Activated CD4-positive, alpha-beta memory T cell treated with anti-CD3 and anti-CD28 coated beads for 36 hours (primary cell): ENCODE measurements at regions of chr1 and their contacts with region 1.

Region 1: DNA sequence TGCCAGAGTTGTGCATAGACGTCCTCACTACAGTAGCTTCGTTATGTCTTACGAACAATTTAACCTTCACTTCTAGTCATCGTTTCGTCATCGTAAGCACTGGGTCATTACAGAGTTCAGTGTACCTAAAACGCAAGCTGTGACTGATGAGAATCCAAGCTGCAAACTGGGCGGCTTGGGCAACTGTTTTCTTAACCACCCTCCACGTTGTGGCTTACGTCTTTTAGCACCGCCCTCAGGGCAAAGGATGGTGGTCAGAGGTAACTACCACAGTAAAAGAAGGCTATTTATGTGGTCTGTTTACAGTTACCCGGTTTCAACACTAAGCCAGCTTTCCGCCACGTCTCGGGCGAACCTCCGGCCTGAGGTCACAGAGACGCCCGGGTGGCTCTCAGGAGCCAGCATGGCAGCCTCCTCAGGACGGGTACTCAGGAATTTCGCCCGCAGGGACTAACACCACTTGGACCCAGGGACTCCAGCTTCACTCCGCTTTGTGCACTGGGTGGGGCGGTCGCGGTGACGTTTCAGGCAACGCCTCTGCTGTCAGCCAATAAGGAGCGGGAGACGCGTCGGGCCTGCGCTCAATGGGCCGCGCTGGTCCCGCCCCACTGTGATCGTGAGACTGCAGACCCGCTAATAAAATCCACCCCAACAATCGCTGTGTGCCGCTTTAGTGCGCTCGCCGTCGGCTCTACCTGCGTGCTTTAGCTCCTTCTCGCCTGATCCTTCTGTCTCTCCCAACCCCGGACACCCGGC is at the start of gene CTH:
- DNase-seq: peak; percentile 96
- H3K4me3 Mint-ChIP-seq: peak within 1 kb of the TSS; percentile 84
- H3K27ac Mint-ChIP-seq: peak within 1 kb of the TSS; percentile 83
- H3K4me1 Mint-ChIP-seq: peaks cover 14% of the 10 kb centered on the region
- H3K27me3 Mint-ChIP-seq: peaks cover 4% of the 10 kb centered on the region
- total RNA-seq, gene CTH: 23.0 to 26.0 TPM

Region 2: DNA sequence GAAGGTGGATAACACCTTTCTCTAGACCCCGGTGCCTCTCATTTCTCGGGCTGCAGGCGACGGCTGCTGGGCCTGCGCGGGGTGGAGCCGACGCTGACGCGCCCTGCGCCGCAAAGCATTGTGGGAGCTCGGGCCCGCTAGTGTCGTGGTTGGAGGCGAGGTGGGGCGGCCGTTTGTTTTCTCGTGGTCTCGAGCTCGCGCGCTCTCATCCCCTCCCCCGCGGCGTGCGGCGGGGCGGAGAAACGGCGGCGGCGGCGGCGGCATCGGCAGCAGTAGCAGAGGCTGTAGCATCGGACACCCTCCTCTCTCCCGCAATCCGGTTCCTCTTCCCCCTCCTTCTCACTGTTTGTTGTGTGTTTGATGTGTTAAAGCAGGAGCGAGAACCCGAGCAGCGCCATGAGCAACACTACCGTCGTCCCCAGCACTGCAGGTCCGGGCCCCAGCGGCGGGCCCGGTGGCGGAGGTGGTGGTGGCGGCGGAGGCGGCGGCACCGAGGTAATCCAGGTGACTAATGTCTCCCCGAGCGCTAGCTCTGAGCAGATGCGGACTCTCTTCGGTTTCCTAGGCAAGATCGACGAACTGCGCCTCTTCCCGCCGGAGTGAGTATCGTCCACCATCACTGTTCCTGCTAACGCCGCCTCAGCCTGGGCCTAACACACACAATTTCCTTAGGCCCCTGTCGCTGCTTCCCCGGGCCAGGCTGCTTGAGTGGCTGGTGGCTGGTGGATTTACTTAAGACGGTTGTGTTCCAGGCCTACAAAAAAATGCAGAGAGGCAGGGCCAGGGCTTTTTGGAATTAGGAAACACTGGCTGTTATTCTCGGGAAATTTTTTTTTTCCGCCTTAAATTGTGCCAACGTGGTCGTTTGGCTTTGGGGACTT is 189.3 kb before region 1 on chr1 and contains the start of gene SRSF11:
- CTCF ChIA-PET with region 1: no interaction called
- POLR2A ChIA-PET with region 1: interaction called, 8 read pairs
- intact Hi-C with region 1: loop called (anchors 1 kb)
- DNase-seq: peak; percentile 98
- H3K4me3 Mint-ChIP-seq: peak within 1 kb of the TSS; percentile 91
- H3K27ac Mint-ChIP-seq: peak within 1 kb of the TSS; percentile 97
- H3K4me1 Mint-ChIP-seq: peaks cover 39% of the 10 kb centered on the region
- H3K27me3 Mint-ChIP-seq: no peaks in the 10 kb centered on the region
- total RNA-seq, gene SRSF11: 156 to 164 TPM

Region 3: DNA sequence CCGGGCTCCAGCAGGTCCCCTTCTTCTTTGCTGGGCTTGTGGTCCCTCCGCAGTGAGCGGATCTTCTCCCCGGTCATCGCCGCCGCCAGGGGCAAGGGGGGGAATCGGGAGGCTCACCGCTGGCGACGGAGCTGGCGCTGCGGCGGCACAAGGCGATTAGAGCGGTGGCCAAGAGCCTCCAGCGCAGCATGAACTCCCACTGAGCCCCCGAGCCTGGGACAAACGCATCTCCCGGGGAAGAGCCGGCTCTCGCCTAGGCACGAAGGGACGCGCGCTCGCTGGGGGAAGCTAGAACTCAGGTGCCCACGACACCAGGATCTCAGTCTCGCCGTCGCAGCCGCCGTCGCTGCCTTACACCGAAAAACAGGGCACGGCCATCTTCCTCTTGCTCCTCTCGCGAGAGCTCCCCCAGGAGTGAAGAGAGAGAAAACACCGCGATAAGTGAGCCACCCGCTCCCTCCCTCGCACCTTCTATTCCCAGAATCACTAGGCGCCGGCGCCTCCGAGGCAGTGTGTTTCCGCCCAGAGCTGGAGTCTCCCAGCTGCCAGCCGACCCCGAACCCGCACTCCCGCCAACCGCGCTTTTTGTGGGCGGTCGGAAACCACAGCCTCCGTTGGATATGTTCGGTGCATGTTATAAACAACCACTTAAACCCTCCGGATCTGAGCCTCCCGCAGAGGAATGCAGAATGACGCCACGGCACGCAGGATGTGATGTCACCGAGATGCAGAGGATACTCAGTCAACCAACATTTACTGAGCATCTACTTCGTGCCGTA is 56.3 kb before region 1 on chr1 and contains the start of gene ANKRD13C:
- CTCF ChIA-PET with region 1: interaction called, 18 read pairs
- POLR2A ChIA-PET with region 1: interaction called, 60 read pairs
- intact Hi-C with region 1: loop called (anchors 1 kb)
- DNase-seq: peak; percentile 95
- H3K4me3 Mint-ChIP-seq: peak within 1 kb of the TSS; percentile 93
- H3K27ac Mint-ChIP-seq: peak within 1 kb of the TSS; percentile 95
- H3K4me1 Mint-ChIP-seq: peaks cover 36% of the 10 kb centered on the region
- H3K27me3 Mint-ChIP-seq: no peaks in the 10 kb centered on the region
- total RNA-seq, gene ANKRD13C: 14.3 to 14.5 TPM

Region 4: DNA sequence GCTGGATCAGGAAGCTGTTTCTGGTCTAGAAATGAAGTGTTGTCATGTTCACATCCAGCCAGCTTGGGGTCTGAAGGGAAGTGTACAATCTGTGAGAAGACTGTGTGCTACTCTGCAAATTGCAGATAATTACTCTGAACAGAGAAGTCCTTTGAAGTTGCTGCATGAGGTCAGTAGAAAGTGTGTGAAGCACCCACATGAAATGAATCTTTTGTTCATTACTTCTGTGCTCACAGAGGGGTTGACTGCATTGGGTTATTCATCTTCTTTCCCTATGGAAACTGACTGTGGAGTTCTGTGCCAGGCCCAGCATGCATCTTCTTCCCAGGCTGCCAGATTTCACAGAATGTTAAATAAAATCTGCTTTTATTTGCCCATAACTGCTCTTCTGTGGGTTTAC is 47.3 kb after region 1 on chr1:
- CTCF ChIA-PET with region 1: no interaction called
- POLR2A ChIA-PET with region 1: interaction called, 12 read pairs
- intact Hi-C with region 1: no loop called
- DNase-seq: no peak
- H3K4me3 Mint-ChIP-seq: no peak overlapping the region
- H3K27ac Mint-ChIP-seq: no peak overlapping the region
- H3K4me1 Mint-ChIP-seq: no peaks in the 10 kb centered on the region
- H3K27me3 Mint-ChIP-seq: no peaks in the 10 kb centered on the region

Region 5: DNA sequence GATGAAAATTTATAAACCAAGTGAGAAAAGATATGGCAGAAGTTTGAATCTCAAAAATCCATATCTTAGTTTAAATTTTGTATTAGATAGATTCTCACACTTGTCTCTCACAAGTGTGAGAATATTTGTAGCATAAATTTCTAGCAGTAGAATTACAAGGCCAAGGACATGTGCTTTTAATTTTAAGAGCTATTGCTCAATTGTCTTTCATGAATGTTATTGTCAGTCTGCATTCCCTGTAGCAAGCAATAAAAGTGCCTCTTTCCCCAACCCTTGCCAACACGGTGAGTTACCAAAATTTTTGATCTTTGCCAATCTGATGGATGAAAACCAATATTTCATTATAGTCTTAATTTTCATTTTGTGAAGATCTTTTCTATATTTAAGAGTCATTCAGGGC is 64.2 kb after region 1 on chr1:
- CTCF ChIA-PET with region 1: no interaction called
- POLR2A ChIA-PET with region 1: no interaction called
- intact Hi-C with region 1: no loop called
- DNase-seq: no peak
- H3K4me3 Mint-ChIP-seq: no peak overlapping the region
- H3K27ac Mint-ChIP-seq: no peak overlapping the region
- H3K4me1 Mint-ChIP-seq: no peaks in the 10 kb centered on the region
- H3K27me3 Mint-ChIP-seq: peaks cover 3% of the 10 kb centered on the region

Region 6: GRCh38 chr1:70542856-70543255 is 132.1 kb after region 1 on chr1:
- CTCF ChIA-PET with region 1: no interaction called
- POLR2A ChIA-PET with region 1: no interaction called
- intact Hi-C with region 1: no loop called
- DNase-seq: no peak
- H3K4me3 Mint-ChIP-seq: no peak overlapping the region
- H3K27ac Mint-ChIP-seq: no peak overlapping the region
- H3K4me1 Mint-ChIP-seq: no peaks in the 10 kb centered on the region
- H3K27me3 Mint-ChIP-seq: peaks cover 6% of the 10 kb centered on the region